Common myeloid progenitor, CD34-positive (primary cell): ENCODE measurements at regions of chr5 and their contacts with region 1.

Region 1: DNA sequence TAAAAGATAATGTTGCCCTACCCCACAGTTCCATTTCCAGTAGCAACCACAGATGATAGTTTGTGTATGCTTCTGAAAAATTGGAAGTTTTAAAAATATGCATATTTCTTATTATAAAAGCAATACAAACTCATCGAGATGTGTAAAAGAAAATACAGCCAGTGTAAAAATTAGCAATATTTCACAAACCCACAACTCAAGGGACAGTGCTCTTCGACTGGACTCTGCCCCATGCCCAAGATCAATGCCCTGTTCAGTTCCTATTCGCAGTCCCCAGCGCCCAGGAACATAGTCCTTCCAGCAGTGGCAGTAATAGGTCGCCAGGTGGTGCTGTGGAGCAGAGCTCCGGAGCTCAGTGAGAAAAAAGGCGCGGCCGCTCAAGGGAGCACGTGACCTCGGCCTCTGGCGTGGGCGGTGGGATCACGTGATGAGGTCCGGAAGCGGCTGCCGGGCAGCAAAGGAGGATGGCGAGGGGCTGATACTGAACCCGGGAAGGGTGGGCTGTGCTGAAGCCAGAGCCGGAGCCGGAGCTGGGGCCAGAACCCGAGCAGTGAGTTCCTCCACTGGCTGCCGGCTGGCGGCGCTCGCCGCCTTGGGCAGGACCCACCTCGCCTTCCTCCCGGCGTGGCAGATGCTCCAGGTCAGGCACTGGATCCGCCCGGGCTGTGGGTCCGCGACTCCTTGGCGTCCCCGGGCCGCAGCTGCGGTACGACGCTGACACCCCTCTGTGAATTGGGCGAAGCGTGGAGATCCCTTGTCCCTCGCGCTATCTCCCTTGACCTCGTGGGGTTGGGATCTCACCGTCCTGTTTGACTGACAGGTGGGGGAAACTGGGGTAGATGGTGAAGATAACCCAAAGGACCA is at the start of gene SLC36A1:
- DNase-seq: peak; percentile 85 to 95 (median 93)
- H3K4me3 ChIP-seq: peak within 1 kb of the TSS; percentile 47 to 86 (median 79)
- H3K27ac ChIP-seq: peak within 1 kb of the TSS in 1 of 2 experiments; percentile 44
- H3K4me1 ChIP-seq: peaks cover 2 to 14% (median 11%) of the 10 kb centered on the region in 4 experiments
- H3K27me3 ChIP-seq: peaks cover 0 to 2% (median 0%) of the 10 kb centered on the region in 5 experiments

Region 2: DNA sequence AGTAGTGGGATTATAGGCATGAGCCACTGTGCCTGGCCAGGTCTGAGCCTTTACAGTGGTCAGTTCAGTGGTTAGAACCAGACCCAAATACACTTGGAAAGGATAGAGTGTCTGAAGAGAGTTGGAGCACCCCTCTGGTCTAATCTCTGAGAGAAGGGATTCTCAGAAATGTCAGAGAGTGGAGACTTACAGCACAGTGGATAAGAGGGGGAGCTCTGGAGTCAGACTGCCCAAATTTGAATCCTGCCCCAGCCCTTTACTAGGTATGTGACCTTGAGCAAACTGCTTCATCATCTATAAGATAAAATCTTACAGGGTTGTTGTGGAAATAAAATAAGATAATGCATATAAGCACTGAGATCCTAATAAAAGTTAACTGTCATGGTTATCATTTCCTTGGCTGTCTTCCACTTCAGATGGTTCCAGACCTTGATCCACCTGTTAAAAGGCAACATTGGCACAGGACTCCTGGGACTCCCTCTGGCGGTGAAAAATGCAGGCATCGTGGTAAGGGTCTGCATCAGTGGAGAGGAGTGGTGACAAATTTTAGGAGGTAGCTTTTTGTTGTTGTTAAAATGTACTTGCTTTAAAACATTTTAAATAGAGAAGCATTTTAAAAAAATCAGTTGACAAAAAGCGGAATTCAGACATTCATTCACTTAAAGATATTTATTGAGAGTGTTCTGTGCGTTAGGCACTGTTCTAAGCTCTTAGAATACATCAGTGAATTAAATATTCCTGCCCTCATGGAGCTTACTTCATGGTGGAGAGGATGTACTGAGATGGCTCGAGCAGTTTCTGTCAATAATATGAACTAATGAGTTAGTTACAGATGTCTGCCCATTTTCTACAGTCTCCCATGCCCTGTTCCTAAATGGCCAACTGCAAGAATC is 16.0 kb after region 1 on chr5:
- CTCF ChIA-PET with region 1: interaction called, 32 read pairs
- POLR2A ChIA-PET with region 1: no interaction called
- DNase-seq: peak in 2 of 3 donors; percentile 8 to 12
- H3K4me3 ChIP-seq: no peak overlapping the region
- H3K27ac ChIP-seq: no peak overlapping the region
- H3K4me1 ChIP-seq: no peaks in the 10 kb centered on the region
- H3K27me3 ChIP-seq: no peaks in the 10 kb centered on the region

Region 3: DNA sequence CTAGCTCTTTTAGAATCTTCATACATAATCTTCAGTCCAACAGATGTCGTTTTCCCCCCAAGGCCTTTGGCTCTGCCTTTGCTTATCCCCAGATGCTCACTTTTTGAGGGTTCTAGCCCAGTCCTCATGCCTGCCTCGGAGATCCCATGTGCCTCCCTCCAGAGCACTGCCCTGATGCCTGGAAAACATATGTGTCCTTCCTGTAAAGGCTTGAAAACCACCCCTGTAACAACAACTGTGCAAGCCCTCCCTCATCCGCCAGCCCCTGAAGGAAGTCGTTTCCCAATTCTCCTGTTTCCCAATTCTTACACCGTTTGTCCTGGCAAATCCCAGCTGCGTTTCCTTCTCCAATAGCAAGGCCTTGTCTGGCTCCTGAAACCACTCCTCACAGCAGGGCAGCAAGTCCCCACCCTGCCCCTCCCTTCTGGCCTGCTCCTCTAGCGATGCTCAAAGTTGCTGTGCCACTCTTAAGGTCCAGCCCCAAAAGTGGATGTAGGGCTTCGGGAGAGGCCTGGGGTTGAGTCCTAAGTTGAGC is 52.2 kb after region 1 on chr5:
- CTCF ChIA-PET with region 1: interaction called, 17 read pairs
- POLR2A ChIA-PET with region 1: no interaction called
- DNase-seq: no peak
- H3K4me3 ChIP-seq: no peak overlapping the region
- H3K27ac ChIP-seq: no peak overlapping the region
- H3K4me1 ChIP-seq: peaks cover 0 to 2% (median 0%) of the 10 kb centered on the region in 4 experiments
- H3K27me3 ChIP-seq: no peaks in the 10 kb centered on the region

Region 4: DNA sequence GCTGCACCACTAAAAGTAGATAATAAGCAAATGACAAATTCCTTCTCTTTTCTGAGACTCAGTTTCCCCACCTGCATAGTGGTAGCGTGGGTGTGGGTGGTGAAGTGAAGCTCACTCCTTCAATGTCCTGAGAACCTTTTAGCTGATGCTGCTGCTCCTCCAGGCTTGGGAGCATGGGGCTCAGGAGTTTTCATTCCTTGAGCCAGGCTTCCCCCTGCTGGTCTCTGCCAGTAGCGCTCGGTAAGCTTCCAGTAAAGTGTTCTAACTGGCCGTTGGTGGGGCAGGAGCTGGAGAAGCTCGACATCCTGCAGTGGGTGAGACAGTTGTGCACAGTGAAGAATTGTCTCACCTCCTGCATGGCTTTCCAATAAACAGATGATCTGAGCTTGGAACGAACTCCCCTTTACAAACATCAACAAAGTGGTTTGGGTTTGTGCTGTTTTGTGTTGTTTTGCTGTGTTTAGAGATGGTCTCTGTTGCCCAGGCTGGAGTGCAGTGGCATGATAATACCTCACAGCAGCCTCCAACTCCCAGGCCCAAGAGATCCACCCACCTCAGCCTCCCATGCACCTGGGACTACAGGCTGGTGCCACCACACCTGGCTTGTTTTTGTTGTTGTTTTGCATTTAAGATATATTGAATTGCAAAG is 204.7 kb after region 1 on chr5:
- CTCF ChIA-PET with region 1: interaction called, 39 read pairs
- POLR2A ChIA-PET with region 1: no interaction called
- DNase-seq: peak; percentile 68 to 79 (median 70)
- H3K4me3 ChIP-seq: no peak overlapping the region
- H3K27ac ChIP-seq: no peak overlapping the region
- H3K4me1 ChIP-seq: no peaks in the 10 kb centered on the region
- H3K27me3 ChIP-seq: no peaks in the 10 kb centered on the region